ENCODE measurements at regions of chr10 and their contacts with region 1.

Region 1: GRCh38 chr10:73625884-73626752 is 15.2 kb downstream of the MYOZ1 start:
- DNase-seq: peak; percentile 99
- H3K4me3 ChIP-seq: peak overlapping the region; percentile 66 to 82 (median 77)
- H3K27ac ChIP-seq: peak overlapping the region; percentile 46
- H3K4me1 ChIP-seq: peaks cover 9% of the 10 kb centered on the region
- H3K27me3 ChIP-seq: no peaks in the 10 kb centered on the region
- CTCF ChIP-seq: no peak
- POLR2A ChIP-seq: peak; percentile 92

Region 2: DNA sequence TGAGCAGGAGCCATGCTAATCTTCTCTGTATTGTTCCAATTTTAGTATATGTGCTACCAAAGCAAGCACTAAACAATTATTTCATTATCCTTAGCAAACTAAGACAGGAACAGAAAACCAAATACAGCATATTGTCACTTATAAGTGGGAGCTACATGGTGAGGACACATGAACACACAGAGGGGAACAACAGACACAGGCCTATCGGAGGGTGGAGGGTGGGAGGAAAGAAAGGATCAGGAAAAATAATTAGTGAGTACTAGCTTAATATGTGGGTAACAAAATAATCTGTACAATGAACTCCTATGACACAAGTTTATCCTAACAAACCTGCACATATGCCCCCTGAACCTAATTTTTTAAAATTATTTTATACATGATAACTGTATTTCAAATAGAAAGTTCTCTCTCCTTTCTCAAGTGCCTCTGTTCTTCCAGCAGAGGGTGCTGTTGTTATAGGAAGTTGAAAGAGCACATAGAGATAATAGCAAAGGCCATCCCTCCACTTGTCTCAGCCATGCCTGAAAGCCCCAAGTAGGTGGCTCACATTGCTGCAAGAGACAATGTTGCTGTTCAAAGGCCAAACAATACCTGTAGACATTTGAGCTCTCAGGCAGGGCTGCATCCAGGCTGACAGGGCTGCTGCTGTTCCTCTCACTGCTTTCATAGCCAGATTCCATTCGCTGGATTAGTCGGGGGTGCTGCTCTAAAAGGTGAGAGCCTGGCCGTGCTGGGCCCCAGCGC is 96.9 kb before region 1 on chr10:
- CTCF ChIA-PET with region 1: interaction called, 3 read pairs
- POLR2A ChIA-PET with region 1: no interaction called
- dilution Hi-C with region 1: loop called (anchors 10 kb)
- intact Hi-C with region 1: loop called (anchors 1 kb)
- DNase-seq: peak; percentile 66
- H3K4me3 ChIP-seq: no peak overlapping the region
- H3K27ac ChIP-seq: no peak overlapping the region
- H3K4me1 ChIP-seq: no peaks in the 10 kb centered on the region
- H3K27me3 ChIP-seq: no peaks in the 10 kb centered on the region
- CTCF ChIP-seq: peak; percentile 63 to 65
- POLR2A ChIP-seq: no peak

Region 3: GRCh38 chr10:73537288-73537687 is 88.8 kb before region 1 on chr10:
- CTCF ChIA-PET with region 1: no interaction called
- POLR2A ChIA-PET with region 1: interaction called, 3 read pairs
- dilution Hi-C with region 1: loop called (anchors 10 kb)
- intact Hi-C with region 1: no loop called
- DNase-seq: no peak
- H3K4me3 ChIP-seq: no peak overlapping the region
- H3K27ac ChIP-seq: no peak overlapping the region
- H3K4me1 ChIP-seq: no peaks in the 10 kb centered on the region
- H3K27me3 ChIP-seq: no peaks in the 10 kb centered on the region
- CTCF ChIP-seq: no peak
- POLR2A ChIP-seq: no peak

Region 4: DNA sequence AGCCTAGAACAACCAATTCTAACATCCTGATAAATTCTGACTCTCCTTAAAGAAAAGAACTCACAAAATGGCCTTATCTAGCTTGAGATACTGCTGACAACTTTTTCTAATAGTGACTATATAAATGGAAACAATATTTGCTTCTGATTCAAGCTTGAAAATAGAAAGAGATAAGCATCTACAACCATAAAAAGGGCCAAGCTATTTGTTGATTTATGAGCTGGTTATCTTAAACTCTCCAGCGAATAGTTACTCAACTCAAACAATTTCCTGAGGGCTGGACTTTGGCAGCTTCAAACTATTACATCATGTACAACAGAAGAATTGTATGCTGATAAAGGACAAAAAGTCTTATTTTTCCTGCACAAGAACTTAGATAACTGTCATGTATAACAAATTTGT is 39.5 kb before region 1 on chr10:
- CTCF ChIA-PET with region 1: interaction called, 5 read pairs
- POLR2A ChIA-PET with region 1: no interaction called
- dilution Hi-C with region 1: no loop called
- intact Hi-C with region 1: loop called (anchors 5 kb)
- DNase-seq: peak; percentile 93
- H3K4me3 ChIP-seq: no peak overlapping the region
- H3K27ac ChIP-seq: no peak overlapping the region
- H3K4me1 ChIP-seq: peaks cover 25% of the 10 kb centered on the region
- H3K27me3 ChIP-seq: peaks cover 18 to 25% of the 10 kb centered on the region in 2 experiments
- CTCF ChIP-seq: no peak
- POLR2A ChIP-seq: no peak